GM12878 (cell line): ENCODE measurements at regions of chr20 and their contacts with region 1.

Region 1: DNA sequence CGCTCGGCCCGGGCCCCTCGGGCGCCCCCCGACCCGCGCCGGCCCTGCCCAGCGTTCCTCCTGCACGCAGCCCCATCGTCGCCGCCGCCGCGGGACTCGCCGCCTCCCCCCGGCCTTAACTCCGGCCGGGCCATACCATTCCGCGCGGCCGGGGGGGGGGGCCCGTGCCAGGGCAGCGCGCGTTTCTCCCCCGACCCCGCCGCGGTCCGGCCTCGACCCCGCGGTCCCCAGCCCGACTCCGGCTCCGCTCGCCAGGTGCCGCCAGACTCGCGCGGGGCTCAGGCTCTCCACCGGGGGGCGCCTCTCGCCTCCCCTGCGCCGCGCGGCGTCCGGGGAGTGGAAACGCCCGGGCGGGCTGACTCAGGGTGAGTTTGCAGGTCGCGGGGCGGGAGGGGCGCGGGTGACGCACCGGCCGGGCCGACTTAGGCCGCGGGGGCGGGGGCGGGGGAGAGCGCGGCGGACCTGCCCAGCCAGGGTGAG is at the start of gene SRXN1:
- DNase-seq: peak; percentile 30
- ATAC-seq: peak; percentile 95
- H3K4me3 ChIP-seq: peak within 1 kb of the TSS; percentile 83
- H3K27ac ChIP-seq: peak within 1 kb of the TSS; percentile 63
- H3K4me1 ChIP-seq: peaks cover 6% of the 10 kb centered on the region; the same call in 1 of the 2 replicates
- H3K27me3 ChIP-seq: no peaks in the 10 kb centered on the region
- CTCF ChIP-seq: peak; percentile 58 to 68 (median 60); a peak in 5 of 6 replicates
- EP300 ChIP-seq: no peak
- POLR2A ChIP-seq: peak; percentile 82
- RAD21 ChIP-seq: peak; percentile 38; the same call in 1 of the 2 replicates
- polyA plus RNA-seq, gene SRXN1: 4.1 to 7.5 TPM

Region 2: GRCh38 chr20:483813-484644 is 169.1 kb before region 1 on chr20:
- CTCF ChIA-PET with region 1: no interaction called
- POLR2A ChIA-PET with region 1: no interaction called
- RAD21 ChIA-PET with region 1: no interaction called
- SMC1A ChIA-PET with region 1: no interaction called
- in situ Hi-C with region 1: no loop called
- intact Hi-C with region 1: no loop called
- DNase-seq: no peak
- ATAC-seq: no peak
- H3K4me3 ChIP-seq: no peak overlapping the region
- H3K27ac ChIP-seq: no peak overlapping the region
- H3K4me1 ChIP-seq: no peaks in the 10 kb centered on the region
- H3K27me3 ChIP-seq: no peaks in the 10 kb centered on the region
- CTCF ChIP-seq: no peak
- EP300 ChIP-seq: no peak
- POLR2A ChIP-seq: no peak
- RAD21 ChIP-seq: no peak

Region 3: DNA sequence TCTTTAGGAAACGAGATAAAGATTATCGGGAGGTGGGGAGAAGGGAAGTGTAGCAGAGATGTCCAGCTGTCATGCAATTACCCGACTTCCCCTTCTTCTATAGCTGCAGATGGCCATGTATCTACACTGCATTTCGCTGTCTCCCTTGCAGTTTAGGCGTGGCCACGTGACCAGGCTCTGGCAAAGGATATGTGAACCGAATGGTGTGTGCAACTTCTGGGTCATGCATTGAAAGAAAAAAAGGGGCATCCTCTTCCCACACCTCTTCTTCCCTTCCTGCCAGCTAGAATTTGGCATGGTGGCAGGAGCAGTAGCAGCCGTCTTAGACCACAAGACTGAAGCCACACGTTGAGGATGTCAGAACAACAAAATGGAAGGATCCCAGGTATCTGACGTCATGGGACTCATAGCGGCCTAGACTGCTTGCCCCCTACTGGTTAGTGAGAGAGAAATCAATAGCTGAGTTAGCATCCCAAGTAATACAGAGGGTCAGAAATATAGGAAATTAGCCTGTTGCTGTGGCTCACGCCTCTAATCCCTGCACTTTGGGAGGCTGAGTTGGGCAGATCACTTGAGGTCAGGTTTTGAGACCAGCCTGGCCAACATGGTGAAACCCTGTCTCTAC is 75.9 kb before region 1 on chr20:
- CTCF ChIA-PET with region 1: no interaction called
- POLR2A ChIA-PET with region 1: no interaction called
- RAD21 ChIA-PET with region 1: no interaction called
- SMC1A ChIA-PET with region 1: interaction called, 4 read pairs
- in situ Hi-C with region 1: no loop called
- intact Hi-C with region 1: loop called (anchors 5 kb)
- DNase-seq: no peak
- ATAC-seq: peak; percentile 83
- H3K4me3 ChIP-seq: no peak overlapping the region
- H3K27ac ChIP-seq: no peak overlapping the region
- H3K4me1 ChIP-seq: no peaks in the 10 kb centered on the region
- H3K27me3 ChIP-seq: peaks cover 0 to 5% of the 10 kb centered on the region in 2 experiments; a peak in 2 of 4 replicates
- CTCF ChIP-seq: peak; percentile 18 to 42 (median 25); a peak in 4 of 6 replicates
- EP300 ChIP-seq: no peak
- POLR2A ChIP-seq: no peak
- RAD21 ChIP-seq: no peak

Region 4: GRCh38 chr20:631101-631500 is 22.0 kb before region 1 on chr20:
- CTCF ChIA-PET with region 1: no interaction called
- POLR2A ChIA-PET with region 1: no interaction called
- RAD21 ChIA-PET with region 1: no interaction called
- SMC1A ChIA-PET with region 1: no interaction called
- in situ Hi-C with region 1: no loop called
- intact Hi-C with region 1: no loop called
- DNase-seq: no peak
- ATAC-seq: no peak
- H3K4me3 ChIP-seq: no peak overlapping the region
- H3K27ac ChIP-seq: no peak overlapping the region
- H3K4me1 ChIP-seq: no peaks in the 10 kb centered on the region
- H3K27me3 ChIP-seq: peaks cover 0 to 2% of the 10 kb centered on the region in 2 experiments; a peak in 2 of 4 replicates
- CTCF ChIP-seq: no peak
- EP300 ChIP-seq: no peak
- POLR2A ChIP-seq: no peak
- RAD21 ChIP-seq: no peak

Region 5: DNA sequence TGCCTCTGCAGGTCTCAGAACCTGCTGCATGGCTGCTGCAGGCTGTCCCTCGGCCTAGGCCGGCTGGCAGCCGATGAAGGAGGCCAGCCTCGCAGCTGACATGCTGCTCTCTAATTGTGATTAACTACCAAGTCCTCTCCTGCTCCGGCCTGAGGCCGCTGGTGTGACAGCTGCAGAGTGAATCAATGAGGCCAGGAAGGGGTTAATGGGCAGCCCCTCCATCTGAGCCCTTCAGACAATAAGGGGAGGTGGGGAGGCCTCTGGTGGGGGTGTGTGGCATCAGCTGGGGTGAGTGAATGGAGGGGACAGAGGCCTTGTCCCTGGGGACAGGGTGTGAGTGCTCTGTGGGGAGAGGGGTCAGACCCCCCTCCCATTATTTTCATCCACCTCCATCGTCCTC is 80.7 kb after region 1 on chr20:
- CTCF ChIA-PET with region 1: interaction called, 3 read pairs
- POLR2A ChIA-PET with region 1: no interaction called
- RAD21 ChIA-PET with region 1: no interaction called
- SMC1A ChIA-PET with region 1: interaction called, 3 read pairs
- in situ Hi-C with region 1: no loop called
- intact Hi-C with region 1: loop called (anchors 5 kb)
- DNase-seq: no peak
- ATAC-seq: no peak
- H3K4me3 ChIP-seq: no peak overlapping the region
- H3K27ac ChIP-seq: no peak overlapping the region
- H3K4me1 ChIP-seq: no peaks in the 10 kb centered on the region
- H3K27me3 ChIP-seq: peaks cover 0 to 4% of the 10 kb centered on the region in 2 experiments; a peak in 2 of 4 replicates
- CTCF ChIP-seq: no peak
- EP300 ChIP-seq: no peak
- POLR2A ChIP-seq: no peak
- RAD21 ChIP-seq: no peak